PC-9 (cell line): ENCODE measurements at regions of chr3 and their contacts with region 1.

Region 1: DNA sequence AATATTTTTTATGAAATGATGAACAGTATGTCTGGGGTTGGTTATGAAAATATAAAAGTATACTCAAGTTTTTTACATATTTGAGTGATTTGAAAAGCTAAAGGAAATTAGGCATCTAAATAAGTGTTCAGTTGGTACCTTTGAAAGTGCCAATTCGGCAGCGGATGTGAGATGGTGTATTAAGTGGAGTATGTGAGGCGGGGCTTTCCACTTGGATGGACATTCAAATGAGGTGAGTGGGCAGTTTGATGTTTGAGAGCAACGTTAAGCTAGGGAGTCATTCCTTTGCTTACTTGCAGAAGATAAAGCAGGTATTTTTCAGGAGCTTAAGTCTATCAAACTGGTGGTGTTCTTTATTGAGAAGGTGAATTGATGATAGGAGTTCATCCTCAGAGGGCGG is 189.0 kb upstream of the GOLIM4 start:
- DNase-seq: no peak
- H3K4me3 ChIP-seq: no peak overlapping the region
- H3K27ac ChIP-seq: no peak overlapping the region
- H3K4me1 ChIP-seq: no peaks in the 10 kb centered on the region
- H3K27me3 ChIP-seq: no peaks in the 10 kb centered on the region
- CTCF ChIP-seq: no peak

Region 2: GRCh38 chr3:168088106-168088720 is 196.5 kb before region 1 on chr3:
- CTCF ChIA-PET with region 1: no interaction called
- POLR2A ChIA-PET with region 1: no interaction called
- intact Hi-C with region 1: no loop called
- DNase-seq: no peak
- H3K4me3 ChIP-seq: no peak overlapping the region
- H3K27ac ChIP-seq: no peak overlapping the region
- H3K4me1 ChIP-seq: 0 out of 2 replicates have a peak, but pooled peaks cover 14% of the 10 kb centered on the region
- H3K27me3 ChIP-seq: no peaks in the 10 kb centered on the region
- CTCF ChIP-seq: no peak; the same call in 1 of the 2 replicates

Region 3: GRCh38 chr3:168314166-168314565 is 29.4 kb after region 1 on chr3:
- CTCF ChIA-PET with region 1: no interaction called
- POLR2A ChIA-PET with region 1: interaction called, 10 read pairs
- intact Hi-C with region 1: no loop called
- DNase-seq: no peak
- H3K4me3 ChIP-seq: no peak overlapping the region
- H3K27ac ChIP-seq: no peak overlapping the region
- H3K4me1 ChIP-seq: no peaks in the 10 kb centered on the region
- H3K27me3 ChIP-seq: no peaks in the 10 kb centered on the region
- CTCF ChIP-seq: no peak